ENCODE measurements at regions of chr12 and their contacts with region 1.

Region 1: DNA sequence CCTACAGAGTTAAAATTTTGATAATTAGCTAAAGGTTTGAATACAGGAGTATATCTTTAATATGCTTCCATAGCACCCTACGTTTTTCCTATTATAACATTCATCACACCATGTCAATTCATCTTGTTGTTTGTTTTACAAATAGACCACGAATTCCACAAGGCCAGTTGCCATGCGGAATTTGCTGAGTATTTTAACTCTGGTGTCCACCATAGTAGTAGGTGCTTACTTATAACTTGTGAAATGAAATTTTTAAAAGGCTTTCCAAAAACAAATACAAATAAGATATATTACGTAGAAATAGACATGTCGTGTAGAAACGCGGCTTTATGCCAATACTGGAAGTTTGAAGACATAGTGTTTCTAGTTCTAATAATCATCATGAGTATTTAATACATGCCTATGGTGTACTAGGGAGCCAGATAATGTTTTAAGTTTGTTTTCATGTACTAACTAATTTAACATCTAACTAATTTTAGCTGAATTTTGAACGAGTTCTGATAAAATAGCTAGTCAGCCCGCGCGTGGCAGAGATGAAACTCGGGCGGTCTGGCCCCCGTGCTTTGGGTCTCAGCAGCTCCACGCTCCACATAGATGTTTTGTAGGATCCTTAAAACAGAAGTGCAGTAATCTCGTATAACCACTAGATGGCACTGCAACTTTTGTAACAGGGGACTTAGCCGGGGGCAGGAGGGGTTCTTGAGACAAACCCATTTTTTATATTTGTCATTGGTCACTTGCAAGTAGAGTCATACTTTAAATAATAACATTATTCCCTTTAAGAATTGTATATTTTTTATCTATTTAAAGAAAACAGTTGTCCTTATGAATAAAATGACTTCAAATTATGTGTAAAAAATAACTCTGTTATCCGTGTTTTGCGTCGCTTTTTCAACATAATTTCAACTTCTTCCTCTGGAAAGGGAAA is 10.2 kb downstream of the CD69 start:
- DNase-seq: peak; percentile 45 to 63
- H3K4me3 ChIP-seq: peak overlapping the region; percentile 46; the same call in 1 of the 2 replicates
- H3K27ac ChIP-seq: no peak overlapping the region
- H3K4me1 ChIP-seq: peaks cover 9% of the 10 kb centered on the region; the same call in 1 of the 2 replicates
- H3K27me3 ChIP-seq: no peaks in the 10 kb centered on the region
- CTCF ChIP-seq: peak; percentile 93

Region 2: GRCh38 chr12:9331218-9331626 is 419.3 kb before region 1 on chr12:
- CTCF ChIA-PET with region 1: interaction called, 6 read pairs
- POLR2A ChIA-PET with region 1: no interaction called
- intact Hi-C with region 1: loop called (anchors 2 kb)
- DNase-seq: peak in 1 of 2 experiments; percentile 65
- H3K4me3 ChIP-seq: no peak overlapping the region
- H3K27ac ChIP-seq: no peak overlapping the region
- H3K4me1 ChIP-seq: no peaks in the 10 kb centered on the region
- H3K27me3 ChIP-seq: no peaks in the 10 kb centered on the region
- CTCF ChIP-seq: peak; percentile 96

Region 3: GRCh38 chr12:9797722-9798619 is 47.4 kb after region 1 on chr12:
- CTCF ChIA-PET with region 1: interaction called, 52 read pairs
- POLR2A ChIA-PET with region 1: no interaction called
- intact Hi-C with region 1: loop called (anchors 1 kb)
- DNase-seq: peak; percentile 83 to 94
- H3K4me3 ChIP-seq: no peak overlapping the region
- H3K27ac ChIP-seq: no peak overlapping the region
- H3K4me1 ChIP-seq: peaks cover 39% of the 10 kb centered on the region
- H3K27me3 ChIP-seq: no peaks in the 10 kb centered on the region
- CTCF ChIP-seq: peak; percentile 75

Region 4: DNA sequence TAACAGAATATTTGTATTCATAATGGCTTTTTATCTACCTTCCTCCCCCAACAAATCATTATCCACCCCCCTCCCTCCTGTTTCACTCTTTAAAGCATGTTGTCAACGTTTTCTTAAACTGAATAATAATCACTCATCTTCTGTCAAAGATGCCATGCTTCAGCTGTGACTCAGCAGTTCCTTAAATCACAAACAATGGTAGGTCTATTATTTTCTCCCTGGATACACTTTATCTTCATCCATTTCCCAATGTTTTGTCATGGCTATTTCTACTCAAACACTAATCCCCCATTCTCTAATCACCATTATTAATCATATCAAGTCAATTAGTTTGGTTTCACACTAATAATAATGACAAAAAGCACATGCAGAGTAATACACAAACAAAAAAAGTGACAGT is 266.3 kb after region 1 on chr12:
- CTCF ChIA-PET with region 1: interaction called, 4 read pairs
- POLR2A ChIA-PET with region 1: no interaction called
- intact Hi-C with region 1: loop called (anchors 5 kb)
- DNase-seq: peak in 1 of 2 experiments; percentile 46
- H3K4me3 ChIP-seq: no peak overlapping the region
- H3K27ac ChIP-seq: peak overlapping the region; percentile 15
- H3K4me1 ChIP-seq: 0 out of 2 replicates have a peak, but pooled peaks cover 5% of the 10 kb centered on the region
- H3K27me3 ChIP-seq: no peaks in the 10 kb centered on the region
- CTCF ChIP-seq: no peak

Region 5: DNA sequence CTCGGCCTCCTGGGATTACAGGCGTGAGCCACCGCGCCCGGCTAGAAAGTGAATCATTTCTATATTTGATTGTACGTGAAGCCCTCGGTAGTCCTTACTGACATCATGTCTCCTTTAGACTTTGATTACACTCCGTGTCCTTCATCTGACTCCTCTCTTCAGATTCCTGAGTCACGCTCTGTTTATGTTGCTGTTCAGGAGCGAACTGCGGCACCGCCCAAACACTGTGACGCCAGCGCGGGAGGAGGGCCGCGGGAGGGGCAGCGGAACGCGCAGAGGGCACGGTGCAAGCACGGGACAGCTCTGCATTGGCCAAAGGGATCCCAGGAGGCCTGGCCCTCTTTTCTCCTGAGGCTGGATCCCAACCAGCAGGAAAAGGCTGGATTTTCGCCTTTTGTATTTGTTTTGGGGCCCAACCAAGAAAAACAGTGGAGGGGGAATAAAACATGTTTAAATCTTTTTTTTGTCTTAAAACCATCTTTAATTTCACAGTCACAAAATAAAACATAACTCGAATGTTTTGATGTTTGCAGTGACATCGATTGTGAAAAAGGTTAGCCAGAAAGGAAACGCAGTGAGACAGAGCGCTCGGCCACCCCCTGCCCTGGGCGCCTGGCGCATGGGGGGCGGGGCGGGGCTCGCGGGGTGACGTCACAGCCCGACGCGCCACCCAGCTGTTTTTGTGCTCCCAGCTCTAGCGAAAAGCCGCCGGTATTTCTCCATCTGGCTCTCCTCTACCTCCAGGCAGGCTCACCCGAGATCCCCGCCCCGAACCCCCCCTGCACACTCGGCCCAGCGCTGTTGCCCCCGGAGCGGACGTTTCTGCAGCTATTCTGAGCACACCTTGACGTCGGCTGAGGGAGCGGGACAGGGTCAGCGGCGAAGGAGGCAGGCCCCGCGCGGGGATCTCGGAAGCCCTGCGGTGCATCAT is 461.9 kb after region 1 on chr12 and contains the start of gene GABARAPL1:
- CTCF ChIA-PET with region 1: interaction called, 3 read pairs
- POLR2A ChIA-PET with region 1: no interaction called
- intact Hi-C with region 1: loop called (anchors 10 kb)
- DNase-seq: peak; percentile 99
- H3K4me3 ChIP-seq: peak within 1 kb of the TSS; percentile 85
- H3K27ac ChIP-seq: peak within 1 kb of the TSS; percentile 90
- H3K4me1 ChIP-seq: peaks cover 20% of the 10 kb centered on the region
- H3K27me3 ChIP-seq: no peaks in the 10 kb centered on the region
- CTCF ChIP-seq: no peak
- total RNA-seq, gene GABARAPL1: 85.6 and 143 TPM in 2 replicates

Region 6: DNA sequence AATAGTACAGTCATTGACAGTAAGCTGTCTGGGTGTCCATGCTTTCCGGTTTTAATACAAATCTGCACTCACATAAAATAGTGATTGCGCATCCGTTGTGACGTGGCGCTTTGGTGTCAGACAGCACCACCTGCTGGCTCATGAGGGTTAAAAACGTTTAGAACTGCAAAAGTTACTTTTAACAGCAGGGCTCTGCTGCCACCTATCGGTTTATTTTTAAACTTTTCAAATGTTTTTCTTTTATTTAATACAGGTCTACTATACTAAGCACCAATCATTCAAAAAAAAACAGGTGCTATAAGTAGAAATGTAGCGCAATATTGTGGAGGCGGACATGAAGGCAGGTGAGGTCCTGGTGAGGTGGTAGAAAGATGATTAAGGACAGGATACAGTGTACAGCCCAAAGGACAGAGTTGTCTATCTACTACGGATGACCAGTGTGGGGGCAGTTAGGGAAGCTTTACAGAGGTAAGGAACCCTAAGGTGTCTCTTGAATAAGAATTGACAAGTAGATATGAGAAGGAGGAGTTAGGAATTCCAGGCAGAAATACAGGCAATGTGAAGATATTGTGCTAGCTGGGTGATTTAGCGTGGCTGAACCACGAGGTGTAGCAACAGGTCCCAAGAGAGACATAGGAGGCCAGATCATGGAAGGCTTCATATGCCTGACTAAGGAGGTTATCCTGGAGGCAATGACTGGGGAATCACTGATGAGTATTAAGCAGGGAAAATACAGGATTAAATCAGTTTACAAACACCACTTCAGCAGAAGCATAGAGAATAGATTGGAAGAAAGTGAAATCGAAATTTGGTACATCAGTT is 1736.3 kb after region 1 on chr12:
- CTCF ChIA-PET with region 1: no interaction called
- POLR2A ChIA-PET with region 1: no interaction called
- intact Hi-C with region 1: loop called (anchors 5 kb)
- DNase-seq: peak; percentile 66 to 71
- H3K4me3 ChIP-seq: no peak overlapping the region
- H3K27ac ChIP-seq: no peak overlapping the region
- H3K4me1 ChIP-seq: peaks cover 12% of the 10 kb centered on the region
- H3K27me3 ChIP-seq: no peaks in the 10 kb centered on the region
- CTCF ChIP-seq: peak; percentile 99

Measured in PC-9 (cell line).